Esophagus squamous epithelium (tissue), 5 donors: ENCODE measurements at regions of chr9 and their contacts with region 1.

Region 1: GRCh38 chr9:78261403-78262001 is 25.6 kb downstream of the CEP78 start:
- DNase-seq: no peak
- H3K4me3 ChIP-seq: no peak overlapping the region
- H3K27ac ChIP-seq: no peak overlapping the region
- H3K4me1 ChIP-seq: peaks cover 0 to 5% (median 0%) of the 10 kb centered on the region in 3 donors
- H3K27me3 ChIP-seq: no peaks in the 10 kb centered on the region
- CTCF ChIP-seq: peak; percentile 21 to 75 (median 62)
- POLR2A ChIP-seq: no peak

Region 2: DNA sequence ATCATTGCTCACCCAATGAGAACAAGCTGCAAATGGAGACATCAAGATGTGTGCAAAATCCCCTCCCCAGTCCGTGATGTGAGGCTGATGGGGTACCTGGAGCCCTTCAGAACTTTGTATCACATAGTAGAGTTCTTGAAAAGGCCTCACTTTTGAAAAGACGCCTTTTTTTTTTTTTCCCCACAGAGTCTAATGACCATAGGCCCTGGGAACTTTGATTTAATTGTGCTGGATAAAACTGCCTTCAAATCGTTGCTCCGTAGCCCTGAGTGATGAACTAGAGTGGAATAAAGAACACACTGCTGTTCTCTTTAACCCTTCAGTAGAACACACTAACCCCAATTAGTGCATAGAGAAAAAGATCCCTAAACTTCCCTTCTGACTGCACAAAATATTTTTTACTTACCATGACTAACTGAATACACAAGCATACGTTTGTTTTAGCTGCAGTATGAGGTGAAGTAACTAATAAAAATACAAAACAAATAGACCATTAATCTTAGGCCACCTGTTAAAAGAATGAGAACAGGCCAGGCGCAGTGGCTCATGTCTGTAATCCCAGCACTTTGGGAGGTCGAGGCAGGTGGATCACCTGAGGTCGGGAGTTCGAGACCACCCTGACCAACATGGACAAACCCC is 50.5 kb after region 1 on chr9:
- intact Hi-C with region 1: no loop called
- DNase-seq: no peak
- H3K4me3 ChIP-seq: no peak overlapping the region
- H3K27ac ChIP-seq: no peak overlapping the region
- H3K4me1 ChIP-seq: no peaks in the 10 kb centered on the region
- H3K27me3 ChIP-seq: no peaks in the 10 kb centered on the region
- CTCF ChIP-seq: no peak
- POLR2A ChIP-seq: no peak

Region 3: GRCh38 chr9:78357165-78357873 is 95.8 kb after region 1 on chr9:
- intact Hi-C with region 1: loop called (anchors 10 kb)
- DNase-seq: no peak
- H3K4me3 ChIP-seq: no peak overlapping the region
- H3K27ac ChIP-seq: no peak overlapping the region
- H3K4me1 ChIP-seq: no peaks in the 10 kb centered on the region
- H3K27me3 ChIP-seq: no peaks in the 10 kb centered on the region
- CTCF ChIP-seq: no peak
- POLR2A ChIP-seq: no peak

Region 4: GRCh38 chr9:78369639-78370219 is 108.2 kb after region 1 on chr9:
- intact Hi-C with region 1: loop called (anchors 5 kb)
- DNase-seq: no peak
- H3K4me3 ChIP-seq: no peak overlapping the region
- H3K27ac ChIP-seq: no peak overlapping the region
- H3K4me1 ChIP-seq: no peaks in the 10 kb centered on the region
- H3K27me3 ChIP-seq: peaks cover 0 to 39% (median 0%) of the 10 kb centered on the region in 4 donors
- CTCF ChIP-seq: peak; percentile 31 to 79 (median 68)
- POLR2A ChIP-seq: no peak